HepG2 (cell line): ENCODE measurements at regions of chr4 and their contacts with region 1.

Region 1: GRCh38 chr4:133929531-133930239 is 271.9 kb downstream of the PABPC4L start:
- DNase-seq: no peak
- ATAC-seq: no peak
- H3K4me3 ChIP-seq: no peak overlapping the region
- H3K27ac ChIP-seq: no peak overlapping the region
- H3K4me1 ChIP-seq: no peaks in the 10 kb centered on the region
- H3K27me3 ChIP-seq: no peaks in the 10 kb centered on the region
- CTCF ChIP-seq: no peak
- EP300 ChIP-seq: no peak
- POLR2A ChIP-seq: no peak
- RAD21 ChIP-seq: no peak

Region 2: GRCh38 chr4:132923516-132923915 is 1006.2 kb before region 1 on chr4:
- CTCF ChIA-PET with region 1: no interaction called
- POLR2A ChIA-PET with region 1: no interaction called
- in situ Hi-C with region 1: no loop called
- intact Hi-C with region 1: loop called (anchors 5 kb)
- DNase-seq: no peak
- ATAC-seq: no peak
- H3K4me3 ChIP-seq: no peak overlapping the region
- H3K27ac ChIP-seq: no peak overlapping the region
- H3K4me1 ChIP-seq: peaks cover 6% of the 10 kb centered on the region; the same call in 1 of the 2 replicates
- H3K27me3 ChIP-seq: no peaks in the 10 kb centered on the region
- CTCF ChIP-seq: no peak
- EP300 ChIP-seq: no peak
- POLR2A ChIP-seq: no peak
- RAD21 ChIP-seq: no peak

Region 3: GRCh38 chr4:133982533-133983224 is 53.0 kb after region 1 on chr4:
- CTCF ChIA-PET with region 1: no interaction called
- POLR2A ChIA-PET with region 1: no interaction called
- in situ Hi-C with region 1: no loop called
- intact Hi-C with region 1: no loop called
- DNase-seq: no peak
- ATAC-seq: no peak
- H3K4me3 ChIP-seq: no peak overlapping the region
- H3K27ac ChIP-seq: no peak overlapping the region
- H3K4me1 ChIP-seq: no peaks in the 10 kb centered on the region
- H3K27me3 ChIP-seq: no peaks in the 10 kb centered on the region
- CTCF ChIP-seq: no peak
- EP300 ChIP-seq: no peak
- POLR2A ChIP-seq: no peak
- RAD21 ChIP-seq: no peak